CD8-positive, alpha-beta memory T cell (primary cell): ENCODE measurements at regions of chr12 and their contacts with region 1.

Region 1: DNA sequence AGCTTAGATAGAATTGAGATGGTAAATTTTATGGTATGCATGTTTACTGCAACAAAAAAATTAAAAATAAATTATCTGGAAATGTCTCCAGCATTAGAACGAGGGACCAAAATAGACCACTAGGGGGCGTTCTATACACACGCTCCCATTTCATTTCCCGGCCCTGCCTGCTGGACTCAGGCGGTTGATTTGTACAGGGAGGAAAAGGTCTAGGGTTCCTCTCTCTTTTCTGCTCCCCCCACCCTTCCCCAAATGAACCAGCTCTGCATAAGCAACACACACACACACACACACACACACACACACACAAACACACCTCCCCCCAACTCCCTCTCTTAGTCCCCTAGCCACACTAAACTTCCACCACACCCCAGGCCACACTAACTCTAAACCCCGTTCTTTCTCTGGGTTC is 7.8 kb upstream of the DTX1 start:
- DNase-seq: peak; percentile 39 to 73 (median 56)
- H3K4me3 ChIP-seq: no peak overlapping the region
- H3K4me3 Mint-ChIP-seq: no peak overlapping the region
- H3K27ac ChIP-seq: no peak overlapping the region
- H3K27ac Mint-ChIP-seq: no peak overlapping the region
- H3K4me1 ChIP-seq: peaks cover 8% of the 10 kb centered on the region
- H3K4me1 Mint-ChIP-seq: peaks cover 0 to 8% (median 2%) of the 10 kb centered on the region in 3 donors
- H3K27me3 ChIP-seq: no peaks in the 10 kb centered on the region
- H3K27me3 Mint-ChIP-seq: peaks cover 6% of the 10 kb centered on the region in 2 donors

Region 2: DNA sequence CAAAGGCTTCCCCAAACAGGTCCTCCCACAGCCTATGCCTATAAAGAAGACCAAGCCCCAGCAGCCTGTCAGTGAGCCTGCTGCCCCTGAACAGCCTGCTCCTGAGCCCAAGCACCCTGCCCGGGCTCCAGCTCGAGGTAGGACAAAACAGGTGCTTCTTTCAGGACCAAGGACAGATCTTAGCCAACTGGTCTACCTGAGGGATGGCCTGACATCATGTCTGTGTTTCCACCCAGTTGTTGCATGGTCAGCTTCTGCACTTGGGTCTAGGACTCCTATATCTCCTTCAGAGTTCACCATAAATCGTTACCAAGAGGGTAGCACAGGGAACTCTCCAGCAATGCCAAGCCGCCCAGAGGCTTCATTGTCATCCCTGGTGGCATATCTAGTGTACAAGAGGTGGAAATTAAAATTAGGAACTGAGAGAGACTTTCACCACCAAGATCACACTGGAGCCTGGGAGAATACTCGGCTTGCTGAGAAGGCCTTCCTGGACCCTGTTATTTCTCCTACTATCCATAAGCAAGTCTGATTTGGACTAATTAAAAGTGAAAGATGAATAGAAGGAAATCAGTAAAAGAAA is 180.2 kb before region 1 on chr12:
- CTCF ChIA-PET with region 1: no interaction called
- POLR2A ChIA-PET with region 1: no interaction called
- DNase-seq: no peak
- H3K4me3 ChIP-seq: no peak overlapping the region
- H3K4me3 Mint-ChIP-seq: no peak overlapping the region
- H3K27ac ChIP-seq: no peak overlapping the region
- H3K27ac Mint-ChIP-seq: no peak overlapping the region
- H3K4me1 ChIP-seq: no peaks in the 10 kb centered on the region
- H3K4me1 Mint-ChIP-seq: no peaks in the 10 kb centered on the region
- H3K27me3 ChIP-seq: no peaks in the 10 kb centered on the region
- H3K27me3 Mint-ChIP-seq: peaks cover 26 to 63% of the 10 kb centered on the region in 2 donors

Region 3: DNA sequence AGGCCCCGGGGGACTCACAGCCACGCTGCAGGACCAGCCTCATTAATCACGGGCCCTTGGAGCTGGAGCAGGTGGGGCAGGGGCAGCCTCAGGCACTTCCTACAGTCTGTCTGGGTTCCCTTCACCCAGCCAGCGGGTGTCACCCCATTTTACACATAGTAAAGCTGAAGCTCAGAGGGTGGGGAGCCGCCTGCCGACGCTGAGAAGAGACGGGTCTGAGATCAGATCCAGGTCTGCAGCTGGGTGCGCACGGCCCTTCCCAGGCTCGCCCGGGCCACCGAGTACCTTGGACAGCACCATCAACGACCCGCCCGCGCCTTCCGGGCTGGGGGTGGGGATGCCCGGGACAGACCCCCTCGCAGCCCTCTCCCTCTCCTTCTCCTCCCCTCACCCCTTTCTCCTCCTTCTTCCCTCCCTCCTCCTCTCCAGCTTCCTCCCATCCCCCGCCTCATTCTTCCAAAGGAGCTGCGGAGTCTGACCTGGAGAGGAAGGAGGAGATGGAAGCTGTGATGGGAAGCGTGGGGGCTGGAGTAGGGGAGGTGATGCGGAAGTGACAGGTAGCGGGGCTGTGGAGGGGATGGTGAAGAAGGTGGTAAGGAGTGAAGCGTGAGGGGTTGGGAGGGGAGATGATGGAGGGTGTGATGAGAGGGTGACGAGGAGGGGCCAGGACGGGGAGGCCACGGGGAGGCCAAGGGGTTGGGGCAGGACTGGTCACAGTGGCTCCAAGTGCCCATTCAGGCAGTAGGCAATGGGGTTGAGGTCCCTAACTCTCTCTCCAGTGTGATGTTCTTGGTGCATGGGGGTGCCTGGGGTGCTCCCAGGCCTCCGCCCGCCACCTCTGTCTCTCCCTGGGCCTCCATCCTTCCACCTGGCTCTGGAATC is 16.6 kb after region 1 on chr12:
- CTCF ChIA-PET with region 1: interaction called, 11 read pairs
- POLR2A ChIA-PET with region 1: no interaction called
- DNase-seq: no peak
- H3K4me3 ChIP-seq: no peak overlapping the region
- H3K4me3 Mint-ChIP-seq: no peak overlapping the region
- H3K27ac ChIP-seq: no peak overlapping the region
- H3K27ac Mint-ChIP-seq: no peak overlapping the region
- H3K4me1 ChIP-seq: peaks cover 16% of the 10 kb centered on the region
- H3K4me1 Mint-ChIP-seq: peaks cover 8 to 17% (median 12%) of the 10 kb centered on the region in 3 donors
- H3K27me3 ChIP-seq: no peaks in the 10 kb centered on the region
- H3K27me3 Mint-ChIP-seq: no peaks in the 10 kb centered on the region

Region 4: GRCh38 chr12:113098446-113098896 is 49.7 kb after region 1 on chr12:
- CTCF ChIA-PET with region 1: interaction called, 35 read pairs
- POLR2A ChIA-PET with region 1: no interaction called
- DNase-seq: peak; percentile 50 to 69 (median 52)
- H3K4me3 ChIP-seq: no peak overlapping the region
- H3K4me3 Mint-ChIP-seq: no peak overlapping the region
- H3K27ac ChIP-seq: no peak overlapping the region
- H3K27ac Mint-ChIP-seq: peak overlapping the region in 3 of 8 donors; percentile 25 to 74 (median 46)
- H3K4me1 ChIP-seq: peaks cover 10% of the 10 kb centered on the region
- H3K4me1 Mint-ChIP-seq: peaks cover 13 to 15% (median 14%) of the 10 kb centered on the region in 3 donors
- H3K27me3 ChIP-seq: no peaks in the 10 kb centered on the region
- H3K27me3 Mint-ChIP-seq: peaks cover 0 to 2% of the 10 kb centered on the region in 2 donors

Region 5: DNA sequence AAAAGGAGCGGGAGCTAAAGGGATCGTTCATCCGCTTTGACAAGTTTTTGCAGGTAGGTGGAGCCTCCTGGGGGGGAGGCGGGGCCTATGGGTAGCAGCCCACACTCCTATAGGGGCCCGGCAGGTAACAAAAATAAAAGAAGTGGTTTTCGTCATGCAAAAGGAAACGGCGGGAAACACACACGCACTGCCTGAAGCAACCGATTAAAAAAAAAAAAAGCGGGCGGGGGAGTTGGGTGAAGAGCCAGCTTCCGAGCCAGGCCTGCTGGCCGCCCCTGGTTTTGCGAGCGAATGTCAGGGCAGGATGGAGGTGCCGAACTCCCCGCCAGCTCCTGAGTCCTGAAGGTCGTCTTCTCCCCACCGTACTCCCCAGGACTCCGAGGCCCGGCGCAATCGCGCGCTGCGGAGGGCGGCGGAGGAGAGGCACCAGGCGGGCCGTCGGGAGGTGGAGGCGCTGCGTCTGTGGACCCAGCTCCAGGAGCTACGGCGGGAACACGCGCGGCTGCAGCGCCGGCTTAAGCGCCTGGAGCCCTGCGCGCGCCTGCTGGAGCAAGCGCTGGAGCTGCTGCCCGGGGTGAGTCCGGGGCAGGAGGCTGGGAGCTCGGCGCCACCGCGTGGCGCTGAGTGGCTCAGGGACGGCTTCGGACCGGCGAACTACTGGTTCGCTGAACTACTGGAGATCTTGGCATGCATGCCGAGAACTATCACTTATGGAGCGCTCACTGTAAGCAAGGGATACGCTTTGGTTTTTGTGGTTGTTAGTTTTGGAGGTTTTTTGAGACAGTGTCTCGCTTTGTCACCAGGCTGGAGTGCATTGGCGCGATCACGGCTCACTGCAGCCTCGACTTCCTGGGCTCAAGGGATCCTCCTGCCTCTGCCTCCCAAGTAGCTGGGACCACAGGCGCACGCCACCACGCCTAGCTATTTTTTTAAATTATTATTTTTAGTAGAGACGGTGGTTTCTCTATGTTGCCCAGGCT is 104.4 kb after region 1 on chr12:
- CTCF ChIA-PET with region 1: interaction called, 18 read pairs
- POLR2A ChIA-PET with region 1: no interaction called
- DNase-seq: peak; percentile 34 to 77 (median 60)
- H3K4me3 ChIP-seq: peak overlapping the region; percentile 56
- H3K4me3 Mint-ChIP-seq: peak overlapping the region; percentile 76 to 89 (median 80)
- H3K27ac ChIP-seq: no peak overlapping the region
- H3K27ac Mint-ChIP-seq: peak overlapping the region in 2 of 8 donors; percentile 1 to 72
- H3K4me1 ChIP-seq: peaks cover 22% of the 10 kb centered on the region
- H3K4me1 Mint-ChIP-seq: peaks cover 16 to 34% (median 26%) of the 10 kb centered on the region in 3 donors
- H3K27me3 ChIP-seq: peaks cover 5% of the 10 kb centered on the region
- H3K27me3 Mint-ChIP-seq: peaks cover 15 to 19% of the 10 kb centered on the region in 2 donors

Region 6: GRCh38 chr12:113252456-113252855 is 203.7 kb after region 1 on chr12:
- CTCF ChIA-PET with region 1: no interaction called
- POLR2A ChIA-PET with region 1: no interaction called
- DNase-seq: no peak
- H3K4me3 ChIP-seq: no peak overlapping the region
- H3K4me3 Mint-ChIP-seq: no peak overlapping the region
- H3K27ac ChIP-seq: no peak overlapping the region
- H3K27ac Mint-ChIP-seq: no peak overlapping the region
- H3K4me1 ChIP-seq: no peaks in the 10 kb centered on the region
- H3K4me1 Mint-ChIP-seq: no peaks in the 10 kb centered on the region
- H3K27me3 ChIP-seq: no peaks in the 10 kb centered on the region
- H3K27me3 Mint-ChIP-seq: no peaks in the 10 kb centered on the region